ENCODE measurements at regions of chr1 and their contacts with region 1.

Region 1: DNA sequence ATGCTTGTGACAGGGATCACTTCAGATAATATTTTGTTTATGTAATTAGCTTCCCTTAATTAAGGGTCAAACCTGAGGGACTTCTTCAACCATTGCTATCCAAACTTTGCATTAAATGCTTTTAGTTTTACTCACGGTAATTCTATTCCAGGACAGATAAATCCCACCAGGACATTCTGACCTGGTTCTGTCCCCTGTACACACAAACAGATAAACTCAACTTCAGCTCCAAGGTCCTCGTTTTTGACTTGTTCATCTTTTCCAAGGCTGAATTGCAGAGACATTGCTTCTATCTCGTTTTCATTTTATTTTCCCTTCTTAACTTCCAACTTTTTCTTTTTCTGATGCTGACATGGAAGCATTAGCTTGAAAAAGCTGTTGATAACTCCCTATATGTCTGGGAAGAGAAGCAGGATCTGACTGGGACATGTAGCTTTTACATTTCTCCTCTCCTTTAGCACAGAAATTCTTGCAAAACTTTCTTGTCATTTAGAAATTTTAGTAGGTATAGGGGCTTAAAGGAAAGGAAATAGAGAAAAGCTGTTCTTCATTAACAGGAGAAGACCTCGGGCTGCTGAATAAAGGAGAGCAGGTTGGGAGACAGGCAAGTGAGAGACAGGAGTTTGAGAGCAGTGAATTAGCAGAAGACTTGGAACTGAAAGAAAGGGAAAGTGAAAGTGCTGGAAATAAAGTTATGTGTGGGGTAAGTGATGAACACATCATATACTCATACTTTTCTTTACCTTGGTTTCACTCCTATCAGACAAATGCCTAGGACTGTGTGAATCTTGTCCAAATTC is 231.7 kb upstream of the B3GALT2 start:
- DNase-seq: no peak
- ATAC-seq: no peak
- H3K4me3 Mint-ChIP-seq: peak overlapping the region; percentile 75
- H3K27ac Mint-ChIP-seq: peak overlapping the region; percentile 48
- H3K4me1 Mint-ChIP-seq: peaks cover 21% of the 10 kb centered on the region
- H3K27me3 Mint-ChIP-seq: no peaks in the 10 kb centered on the region
- CTCF ChIP-seq: no peak

Region 2: GRCh38 chr1:193256019-193256418 is 162.1 kb before region 1 on chr1:
- CTCF ChIA-PET with region 1: no interaction called
- POLR2A ChIA-PET with region 1: no interaction called
- intact Hi-C with region 1: no loop called
- DNase-seq: no peak
- ATAC-seq: no peak
- H3K4me3 Mint-ChIP-seq: no peak overlapping the region
- H3K27ac Mint-ChIP-seq: no peak overlapping the region
- H3K4me1 Mint-ChIP-seq: no peaks in the 10 kb centered on the region
- H3K27me3 Mint-ChIP-seq: no peaks in the 10 kb centered on the region
- CTCF ChIP-seq: no peak

Region 3: GRCh38 chr1:193448682-193449461 is 30.7 kb after region 1 on chr1:
- CTCF ChIA-PET with region 1: no interaction called
- POLR2A ChIA-PET with region 1: no interaction called
- intact Hi-C with region 1: loop called (anchors 1 kb)
- DNase-seq: no peak
- ATAC-seq: peak; percentile 81
- H3K4me3 Mint-ChIP-seq: no peak overlapping the region
- H3K27ac Mint-ChIP-seq: peak overlapping the region; percentile 74
- H3K4me1 Mint-ChIP-seq: peaks cover 17% of the 10 kb centered on the region
- H3K27me3 Mint-ChIP-seq: no peaks in the 10 kb centered on the region
- CTCF ChIP-seq: no peak

Region 4: DNA sequence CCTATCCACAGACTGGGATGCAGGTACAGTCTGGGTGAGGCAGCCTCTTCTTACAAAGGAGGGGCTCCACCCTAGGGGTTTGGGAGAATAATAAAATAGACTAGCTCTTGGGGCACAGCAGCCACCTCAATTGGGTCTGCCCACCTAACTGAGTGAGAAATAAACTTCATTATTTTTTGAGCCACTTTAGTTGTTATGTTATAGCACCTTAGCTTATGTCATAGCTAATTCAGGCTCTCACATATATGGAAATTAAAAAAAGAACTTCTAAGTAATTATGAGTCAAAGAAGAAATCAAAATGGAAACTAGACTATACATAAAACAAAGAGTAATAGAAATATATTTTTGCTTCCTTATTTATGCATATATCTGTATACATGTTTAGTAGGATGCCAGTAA is 86.8 kb after region 1 on chr1:
- CTCF ChIA-PET with region 1: no interaction called
- POLR2A ChIA-PET with region 1: no interaction called
- intact Hi-C with region 1: no loop called
- DNase-seq: no peak
- ATAC-seq: no peak
- H3K4me3 Mint-ChIP-seq: no peak overlapping the region
- H3K27ac Mint-ChIP-seq: no peak overlapping the region
- H3K4me1 Mint-ChIP-seq: no peaks in the 10 kb centered on the region
- H3K27me3 Mint-ChIP-seq: peaks cover 4% of the 10 kb centered on the region
- CTCF ChIP-seq: no peak